HEK293 (cell line): ENCODE measurements at regions of chr10 and their contacts with region 1.

Region 1: DNA sequence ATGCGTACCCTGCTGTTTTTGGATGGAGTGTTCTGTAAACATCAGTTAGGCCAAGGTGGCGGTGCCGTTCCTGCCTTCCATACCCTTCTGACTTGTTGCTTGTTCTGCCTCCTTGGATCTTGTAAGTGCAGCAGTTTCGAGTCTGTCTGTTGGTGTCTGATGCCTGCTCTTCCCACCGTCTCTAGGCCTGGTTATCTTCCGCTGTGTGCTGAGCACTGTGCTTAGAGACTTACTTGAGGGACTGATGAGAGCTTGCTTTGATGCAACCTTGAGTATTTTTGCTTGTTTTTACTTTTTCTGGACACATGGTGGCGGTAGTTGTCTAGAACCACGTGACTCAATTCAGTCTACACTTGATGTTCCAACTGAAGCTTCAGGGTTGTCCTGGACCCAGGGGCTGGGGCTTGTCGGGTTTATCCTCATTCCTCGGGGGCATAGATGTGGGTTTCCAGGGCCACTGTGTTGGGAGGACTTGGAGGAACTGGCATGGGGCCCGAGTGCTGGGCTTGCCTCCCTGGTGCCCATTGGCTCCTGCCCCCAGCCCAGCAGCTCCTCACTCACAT is 14.4 kb upstream of the SPRN start:
- H3K4me3 ChIP-seq: no peak overlapping the region
- H3K27ac ChIP-seq: no peak overlapping the region
- H3K4me1 ChIP-seq: no peaks in the 10 kb centered on the region
- CTCF ChIP-seq: peak; percentile 33; the same call in 1 of the 2 replicates

Region 2: DNA sequence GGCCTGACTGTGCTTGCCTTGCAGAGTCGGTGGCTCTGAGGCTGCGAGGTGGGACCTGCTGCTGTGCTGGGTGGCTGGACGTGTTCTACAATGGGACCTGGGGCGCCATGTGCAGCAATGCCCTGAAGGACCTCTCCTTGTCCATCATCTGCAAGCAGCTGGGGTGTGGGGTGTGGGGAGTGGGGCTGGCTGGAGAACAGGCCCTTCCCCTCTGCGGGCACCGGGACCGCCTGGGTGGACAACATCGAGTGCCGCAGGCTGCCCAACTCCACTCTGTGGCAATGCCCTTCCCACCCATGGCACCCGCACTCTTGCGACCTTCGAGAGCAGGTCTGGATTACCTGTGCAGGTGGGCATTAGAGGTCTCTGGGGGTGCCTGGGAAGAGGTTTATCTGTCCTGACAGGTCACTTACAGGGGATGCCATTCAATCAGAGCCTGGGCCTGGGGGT is 25.8 kb after region 1 on chr10:
- CTCF ChIA-PET with region 1: no interaction called
- POLR2A ChIA-PET with region 1: no interaction called
- H3K4me3 ChIP-seq: no peak overlapping the region
- H3K27ac ChIP-seq: no peak overlapping the region
- H3K4me1 ChIP-seq: no peaks in the 10 kb centered on the region
- CTCF ChIP-seq: no peak

Region 3: GRCh38 chr10:133520155-133520738 is 81.5 kb after region 1 on chr10:
- CTCF ChIA-PET with region 1: interaction called, 12 read pairs
- POLR2A ChIA-PET with region 1: no interaction called
- H3K4me3 ChIP-seq: peak overlapping the region; percentile 19
- H3K27ac ChIP-seq: no peak overlapping the region
- H3K4me1 ChIP-seq: no peaks in the 10 kb centered on the region
- CTCF ChIP-seq: peak; percentile 96

Region 4: GRCh38 chr10:133608855-133609254 is 170.1 kb after region 1 on chr10:
- CTCF ChIA-PET with region 1: interaction called, 19 read pairs
- POLR2A ChIA-PET with region 1: no interaction called
- H3K4me3 ChIP-seq: no peak overlapping the region
- H3K27ac ChIP-seq: no peak overlapping the region
- H3K4me1 ChIP-seq: no peaks in the 10 kb centered on the region
- CTCF ChIP-seq: no peak